ENCODE measurements at regions of chr18 and their contacts with region 1.

Region 1: DNA sequence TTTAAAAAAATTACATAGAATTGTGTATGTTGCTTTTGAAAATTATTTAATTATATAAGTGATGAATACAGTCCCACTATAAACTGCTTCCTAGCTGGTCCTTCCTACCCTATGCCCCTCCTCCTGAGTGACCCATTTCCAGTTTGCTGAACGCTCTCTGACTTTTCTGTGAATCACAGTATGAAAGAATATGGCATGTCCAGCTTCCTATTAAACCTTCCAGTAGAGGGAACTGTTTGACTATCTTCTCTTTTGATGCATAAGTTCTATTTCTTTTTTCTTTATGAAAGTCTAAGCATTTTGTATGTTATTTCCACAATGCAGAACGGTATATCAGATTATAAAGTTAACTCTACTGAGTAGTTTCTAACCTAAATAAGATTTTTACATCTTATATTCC is 41.3 kb downstream of the PSMG2 start:
- DNase-seq: peak; percentile 51
- ATAC-seq: peak; percentile 80
- H3K4me3 ChIP-seq: no peak overlapping the region
- H3K27ac ChIP-seq: no peak overlapping the region
- H3K4me1 ChIP-seq: peaks cover 5% of the 10 kb centered on the region; the same call in 1 of the 2 replicates
- H3K27me3 ChIP-seq: no peaks in the 10 kb centered on the region
- CTCF ChIP-seq: no peak; the same call in 1 of the 2 replicates

Region 2: GRCh38 chr18:12516049-12516630 is 228.0 kb before region 1 on chr18:
- CTCF ChIA-PET with region 1: no interaction called
- POLR2A ChIA-PET with region 1: no interaction called
- in situ Hi-C with region 1: no loop called
- intact Hi-C with region 1: no loop called
- DNase-seq: no peak
- ATAC-seq: 0 out of 2 replicates have a peak, but pooled peaks have one; percentile 21
- H3K4me3 ChIP-seq: no peak overlapping the region
- H3K27ac ChIP-seq: no peak overlapping the region
- H3K4me1 ChIP-seq: no peaks in the 10 kb centered on the region
- H3K27me3 ChIP-seq: no peaks in the 10 kb centered on the region
- CTCF ChIP-seq: no peak

Region 3: DNA sequence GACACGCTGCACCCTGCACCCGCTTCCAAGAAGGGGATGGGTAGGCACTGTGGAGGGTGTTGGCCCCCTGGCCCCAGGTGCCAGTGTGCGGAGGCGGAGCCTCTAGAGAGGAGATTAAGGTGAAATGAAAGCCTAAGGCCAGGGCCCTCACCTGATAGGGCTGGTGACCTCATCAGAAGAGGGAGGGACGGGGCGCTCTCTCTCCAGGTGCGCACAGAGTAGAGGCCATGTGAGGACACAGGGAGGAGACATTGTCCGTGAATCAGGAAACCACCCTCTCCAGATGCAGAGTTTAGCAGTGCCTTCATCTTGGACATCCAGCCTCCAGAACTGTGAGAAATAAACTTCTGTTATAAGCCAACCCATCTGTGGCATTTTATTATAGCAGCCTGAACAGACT is 21.0 kb after region 1 on chr18:
- CTCF ChIA-PET with region 1: no interaction called
- POLR2A ChIA-PET with region 1: interaction called, 11 read pairs
- in situ Hi-C with region 1: no loop called
- intact Hi-C with region 1: no loop called
- DNase-seq: no peak
- ATAC-seq: peak; percentile 33; the same call in 1 of the 2 replicates
- H3K4me3 ChIP-seq: no peak overlapping the region
- H3K27ac ChIP-seq: no peak overlapping the region
- H3K4me1 ChIP-seq: no peaks in the 10 kb centered on the region
- H3K27me3 ChIP-seq: no peaks in the 10 kb centered on the region
- CTCF ChIP-seq: no peak

Region 4: GRCh38 chr18:13982136-13982535 is 1238.0 kb after region 1 on chr18:
- CTCF ChIA-PET with region 1: no interaction called
- POLR2A ChIA-PET with region 1: no interaction called
- in situ Hi-C with region 1: no loop called
- intact Hi-C with region 1: no loop called
- DNase-seq: no peak
- ATAC-seq: no peak
- H3K4me3 ChIP-seq: no peak overlapping the region
- H3K27ac ChIP-seq: no peak overlapping the region
- H3K4me1 ChIP-seq: no peaks in the 10 kb centered on the region
- H3K27me3 ChIP-seq: no peaks in the 10 kb centered on the region
- CTCF ChIP-seq: no peak